ENCODE measurements at regions of chr3 and their contacts with region 1.

Region 1: DNA sequence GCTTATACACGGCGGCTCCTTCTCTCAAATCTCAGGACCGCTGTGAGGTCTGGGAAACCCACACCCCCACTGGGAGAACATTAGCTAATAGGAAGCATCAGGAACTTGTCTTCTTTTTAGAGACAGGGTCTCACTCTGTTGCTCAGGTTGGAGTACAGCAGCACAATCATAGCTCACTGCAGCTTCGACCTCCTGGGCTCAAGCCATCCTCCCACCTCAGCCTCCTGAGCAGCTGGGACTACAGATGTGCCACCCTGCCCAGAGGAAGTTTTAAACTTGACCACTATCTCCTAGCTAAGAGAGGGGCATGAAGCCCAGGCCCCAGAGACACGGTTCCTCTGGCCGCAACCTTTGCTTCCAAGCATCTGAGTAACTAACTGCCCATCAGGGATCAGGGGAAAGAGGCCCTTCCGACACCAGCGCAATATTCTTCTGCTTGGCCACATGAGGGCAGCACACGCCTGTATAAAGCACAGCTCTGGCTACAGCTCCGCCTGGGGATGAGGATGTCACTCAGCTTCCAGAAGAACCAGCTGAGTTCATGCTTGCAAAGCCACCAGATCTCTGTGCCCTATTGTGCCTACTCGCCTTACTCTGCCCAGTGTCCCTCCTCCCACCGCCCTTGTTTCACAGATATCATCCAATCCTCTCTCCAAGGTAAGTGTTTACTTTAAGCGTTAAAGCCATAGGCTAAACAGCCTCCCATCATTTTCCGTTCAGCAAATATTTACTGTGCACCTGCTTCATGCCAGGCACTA is 57.5 kb upstream of the SLC6A11 start:
- DNase-seq: peak; percentile 66 to 73
- H3K4me3 ChIP-seq: no peak overlapping the region
- H3K4me3 Mint-ChIP-seq: no peak overlapping the region
- H3K27ac Mint-ChIP-seq: no peak overlapping the region
- H3K4me1 ChIP-seq: no peaks in the 10 kb centered on the region
- H3K4me1 Mint-ChIP-seq: no peaks in the 10 kb centered on the region
- H3K27me3 ChIP-seq: no peaks in the 10 kb centered on the region; the same call in 1 of the 2 replicates
- H3K27me3 Mint-ChIP-seq: peaks cover 10% of the 10 kb centered on the region
- CTCF ChIP-seq: peak; percentile 74 to 82

Region 2: DNA sequence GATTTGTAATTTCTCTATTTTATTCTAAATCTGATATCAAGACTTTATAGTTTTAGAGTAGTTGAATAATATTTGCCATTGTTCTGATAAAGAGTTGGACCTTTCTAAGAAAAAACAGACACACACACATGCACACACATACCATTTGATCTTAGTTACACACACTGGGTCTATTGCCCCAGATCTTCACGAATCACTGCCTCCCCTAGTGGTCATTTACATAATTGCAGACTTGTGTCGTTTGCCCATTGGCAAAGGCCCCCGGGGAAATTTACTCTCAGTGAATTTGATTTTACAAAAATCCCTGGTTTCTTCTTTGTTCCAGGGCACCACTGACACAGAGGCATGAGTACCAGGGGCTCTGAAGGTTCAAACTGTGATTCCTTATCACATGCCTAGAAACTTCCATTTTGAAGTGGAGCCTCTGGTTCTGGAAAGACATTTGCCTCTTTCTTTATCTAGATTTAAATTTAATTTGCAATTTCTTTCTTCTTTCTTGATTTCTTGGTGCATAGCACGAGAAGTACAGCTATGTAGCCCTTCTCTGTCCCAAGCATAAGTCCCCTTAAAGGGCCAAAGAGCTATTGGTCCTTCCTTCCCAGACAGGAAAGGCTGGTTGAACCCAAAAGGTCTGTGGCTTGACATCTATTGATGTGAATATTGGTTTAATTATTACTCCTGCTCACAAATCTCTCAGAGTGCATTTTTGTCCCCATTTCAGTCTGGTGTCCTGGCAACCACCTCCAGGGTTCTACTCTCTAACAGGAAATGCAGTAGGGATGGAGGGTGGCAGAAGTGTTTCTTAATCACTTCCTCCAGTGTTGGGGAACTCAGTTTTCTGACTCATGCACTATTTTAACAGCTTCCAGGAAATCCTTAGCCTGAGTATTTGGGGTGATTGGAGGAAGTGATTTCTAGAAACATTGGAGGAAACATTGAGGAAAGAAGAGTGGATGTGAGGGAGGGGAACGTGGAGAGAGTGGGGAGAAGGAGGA is 25.2 kb after region 1 on chr3:
- CTCF ChIA-PET with region 1: no interaction called
- POLR2A ChIA-PET with region 1: no interaction called
- intact Hi-C with region 1: loop called (anchors 1 kb)
- DNase-seq: peak in 1 of 2 experiments; percentile 56
- H3K4me3 ChIP-seq: no peak overlapping the region
- H3K4me3 Mint-ChIP-seq: no peak overlapping the region
- H3K27ac Mint-ChIP-seq: no peak overlapping the region
- H3K4me1 ChIP-seq: no peaks in the 10 kb centered on the region
- H3K4me1 Mint-ChIP-seq: peaks cover 8% of the 10 kb centered on the region
- H3K27me3 ChIP-seq: no peaks in the 10 kb centered on the region
- H3K27me3 Mint-ChIP-seq: no peaks in the 10 kb centered on the region
- CTCF ChIP-seq: peak; percentile 66 to 82

Region 3: DNA sequence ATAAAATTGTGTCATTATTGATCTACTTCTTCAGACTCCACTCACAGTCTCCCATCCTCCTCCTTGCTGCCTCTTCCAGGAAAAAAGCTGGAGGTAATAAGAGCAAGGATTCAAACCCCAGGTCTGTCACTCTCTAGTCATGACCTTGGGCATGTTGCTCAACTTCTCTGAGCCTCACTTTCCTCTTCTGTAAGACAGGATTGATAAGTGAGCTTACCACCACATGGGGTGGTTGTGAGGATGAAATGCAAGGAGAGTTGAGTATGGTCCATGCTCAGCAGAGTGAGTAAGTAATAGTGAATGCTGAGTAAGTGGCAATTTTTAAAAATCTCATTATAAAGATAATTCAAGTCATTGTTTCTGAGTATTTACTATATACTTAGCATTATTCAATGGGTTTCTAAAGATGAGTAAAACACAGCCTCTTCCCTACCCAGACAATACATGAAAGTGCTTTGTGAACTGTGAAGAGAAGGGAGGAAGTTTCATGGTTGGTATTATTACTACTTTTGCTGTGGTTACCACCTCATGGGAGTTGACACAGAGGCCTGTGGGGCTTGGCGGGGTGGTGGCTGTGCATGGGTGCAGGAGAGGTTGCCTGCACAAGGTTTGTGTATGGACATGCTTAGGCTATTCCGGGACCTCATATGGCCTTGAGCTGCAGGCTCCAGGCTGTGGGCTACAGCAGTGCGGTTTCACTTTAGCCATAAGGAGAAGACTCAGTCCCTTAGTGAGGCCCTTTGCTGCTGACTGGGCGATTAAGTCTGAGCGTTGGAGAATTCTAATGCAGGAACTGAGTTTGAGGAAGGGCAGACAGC is 87.6 kb after region 1 on chr3:
- CTCF ChIA-PET with region 1: no interaction called
- POLR2A ChIA-PET with region 1: no interaction called
- intact Hi-C with region 1: no loop called
- DNase-seq: no peak
- H3K4me3 ChIP-seq: no peak overlapping the region
- H3K4me3 Mint-ChIP-seq: no peak overlapping the region
- H3K27ac Mint-ChIP-seq: no peak overlapping the region
- H3K4me1 ChIP-seq: no peaks in the 10 kb centered on the region
- H3K4me1 Mint-ChIP-seq: no peaks in the 10 kb centered on the region
- H3K27me3 ChIP-seq: no peaks in the 10 kb centered on the region
- H3K27me3 Mint-ChIP-seq: peaks cover 15% of the 10 kb centered on the region
- CTCF ChIP-seq: no peak

Region 4: DNA sequence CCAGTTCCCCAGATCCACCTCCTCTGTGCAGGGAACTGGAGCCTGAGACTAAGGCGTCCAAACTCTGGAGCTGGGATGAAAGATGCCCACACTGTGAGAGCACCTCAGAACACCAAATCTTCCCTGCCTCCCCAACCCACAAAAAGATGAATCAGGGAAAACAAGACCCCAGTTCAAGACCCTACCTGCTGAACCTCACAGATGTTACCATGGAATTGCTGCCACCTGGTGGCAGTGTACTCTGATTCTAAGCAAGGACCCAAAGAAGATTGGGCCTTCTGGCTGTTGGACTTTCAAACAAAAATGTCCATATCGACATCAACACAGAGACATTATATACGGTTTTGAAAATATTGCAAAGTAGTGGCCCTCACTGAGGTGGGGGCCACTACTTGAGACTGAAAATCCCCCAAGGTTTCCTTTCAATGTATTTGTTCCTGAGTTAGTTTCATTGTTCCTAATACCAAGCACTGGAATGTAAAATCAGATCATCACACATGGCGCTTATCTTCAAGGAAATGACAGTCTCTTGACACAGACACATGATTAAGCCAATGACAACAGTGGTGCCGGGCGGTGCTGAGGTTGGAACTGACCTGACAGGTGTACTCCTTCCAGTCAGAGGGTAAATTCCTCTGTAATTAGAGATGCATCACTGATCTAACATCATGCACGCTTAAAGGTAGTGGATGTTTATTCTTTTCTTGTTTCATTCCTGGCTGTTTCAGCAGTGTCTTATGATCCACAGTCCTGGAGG is 125.2 kb after region 1 on chr3:
- CTCF ChIA-PET with region 1: interaction called, 5 read pairs
- POLR2A ChIA-PET with region 1: no interaction called
- intact Hi-C with region 1: loop called (anchors 1 kb)
- DNase-seq: peak in 1 of 2 experiments; percentile 26
- H3K4me3 ChIP-seq: no peak overlapping the region
- H3K4me3 Mint-ChIP-seq: no peak overlapping the region
- H3K27ac Mint-ChIP-seq: no peak overlapping the region
- H3K4me1 ChIP-seq: no peaks in the 10 kb centered on the region
- H3K4me1 Mint-ChIP-seq: no peaks in the 10 kb centered on the region
- H3K27me3 ChIP-seq: no peaks in the 10 kb centered on the region; the same call in 1 of the 2 replicates
- H3K27me3 Mint-ChIP-seq: peaks cover 19% of the 10 kb centered on the region
- CTCF ChIP-seq: peak; percentile 36 to 61

Region 5: DNA sequence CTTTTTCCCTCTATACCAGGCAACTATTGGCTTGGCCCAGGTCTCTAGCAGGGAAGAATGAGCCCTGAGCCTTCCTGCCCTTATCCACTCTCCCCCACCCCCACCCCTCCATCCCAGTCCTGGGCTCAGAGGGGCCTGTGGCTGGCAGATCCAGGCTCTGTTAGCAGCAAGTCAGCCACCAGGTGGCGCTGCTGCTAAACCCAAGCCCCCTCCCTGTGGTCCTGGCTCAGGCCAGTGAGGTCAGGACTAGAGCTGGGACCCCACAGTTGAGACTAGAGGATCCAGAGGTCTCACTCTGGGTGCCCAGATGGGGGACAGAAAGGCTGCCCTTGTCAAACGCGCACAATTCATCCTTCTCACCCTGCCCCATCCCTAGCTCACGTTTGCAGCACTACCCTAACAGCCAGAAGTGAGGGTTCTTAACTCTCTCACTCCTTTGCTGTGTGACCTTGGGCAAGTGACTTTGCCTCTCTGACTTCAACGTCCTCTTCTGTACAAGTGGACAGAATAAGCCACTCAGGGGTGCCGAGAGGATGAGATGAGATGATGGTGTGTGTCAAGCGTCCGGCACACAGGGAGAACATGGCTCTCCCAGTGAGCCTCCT is 187.3 kb after region 1 on chr3:
- CTCF ChIA-PET with region 1: interaction called, 4 read pairs
- POLR2A ChIA-PET with region 1: no interaction called
- intact Hi-C with region 1: loop called (anchors 1 kb)
- DNase-seq: peak; percentile 57 to 66
- H3K4me3 ChIP-seq: no peak overlapping the region
- H3K4me3 Mint-ChIP-seq: no peak overlapping the region
- H3K27ac Mint-ChIP-seq: no peak overlapping the region
- H3K4me1 ChIP-seq: no peaks in the 10 kb centered on the region
- H3K4me1 Mint-ChIP-seq: no peaks in the 10 kb centered on the region
- H3K27me3 ChIP-seq: no peaks in the 10 kb centered on the region
- H3K27me3 Mint-ChIP-seq: peaks cover 14% of the 10 kb centered on the region
- CTCF ChIP-seq: peak; percentile 76 to 80

Region 6: DNA sequence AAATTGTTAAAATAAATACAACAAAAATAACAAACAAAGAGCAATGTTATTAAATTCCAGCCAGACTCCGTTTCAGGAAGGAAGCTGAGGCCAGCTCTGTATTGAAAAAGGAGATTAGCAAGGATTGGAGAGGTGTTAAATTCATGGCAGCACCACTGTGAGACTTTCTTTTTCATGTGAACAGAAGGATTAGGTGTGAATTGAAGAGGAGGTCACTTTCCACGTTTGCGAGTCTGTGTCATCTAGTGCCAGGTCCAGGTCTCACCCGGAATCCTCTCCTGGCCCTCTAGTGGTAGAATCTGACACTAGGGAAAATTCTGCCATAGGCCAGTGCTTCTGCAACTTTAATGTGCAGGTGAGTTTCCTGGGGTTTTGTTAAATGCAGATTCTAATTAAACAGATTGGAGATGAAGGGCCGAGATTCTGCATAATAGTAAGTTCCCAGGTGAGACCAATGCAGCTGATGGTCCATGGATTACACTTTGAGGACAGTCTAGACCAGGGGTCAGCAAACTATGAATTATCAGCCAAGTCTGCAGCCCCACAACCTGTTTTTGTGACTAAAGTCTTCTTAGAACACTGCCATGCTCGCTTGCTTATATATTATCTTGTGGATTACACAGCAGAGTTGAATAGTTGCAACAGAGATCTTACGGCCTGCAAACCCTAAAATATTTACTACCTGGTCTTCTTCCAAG is 224.9 kb after region 1 on chr3:
- CTCF ChIA-PET with region 1: no interaction called
- POLR2A ChIA-PET with region 1: no interaction called
- intact Hi-C with region 1: loop called (anchors 1 kb)
- DNase-seq: peak; percentile 49 to 63
- H3K4me3 ChIP-seq: no peak overlapping the region
- H3K4me3 Mint-ChIP-seq: no peak overlapping the region
- H3K27ac Mint-ChIP-seq: no peak overlapping the region
- H3K4me1 ChIP-seq: peaks cover 6% of the 10 kb centered on the region; the same call in 1 of the 2 replicates
- H3K4me1 Mint-ChIP-seq: no peaks in the 10 kb centered on the region
- H3K27me3 ChIP-seq: no peaks in the 10 kb centered on the region
- H3K27me3 Mint-ChIP-seq: peaks cover 8% of the 10 kb centered on the region
- CTCF ChIP-seq: peak; percentile 69 to 86

Region 7: DNA sequence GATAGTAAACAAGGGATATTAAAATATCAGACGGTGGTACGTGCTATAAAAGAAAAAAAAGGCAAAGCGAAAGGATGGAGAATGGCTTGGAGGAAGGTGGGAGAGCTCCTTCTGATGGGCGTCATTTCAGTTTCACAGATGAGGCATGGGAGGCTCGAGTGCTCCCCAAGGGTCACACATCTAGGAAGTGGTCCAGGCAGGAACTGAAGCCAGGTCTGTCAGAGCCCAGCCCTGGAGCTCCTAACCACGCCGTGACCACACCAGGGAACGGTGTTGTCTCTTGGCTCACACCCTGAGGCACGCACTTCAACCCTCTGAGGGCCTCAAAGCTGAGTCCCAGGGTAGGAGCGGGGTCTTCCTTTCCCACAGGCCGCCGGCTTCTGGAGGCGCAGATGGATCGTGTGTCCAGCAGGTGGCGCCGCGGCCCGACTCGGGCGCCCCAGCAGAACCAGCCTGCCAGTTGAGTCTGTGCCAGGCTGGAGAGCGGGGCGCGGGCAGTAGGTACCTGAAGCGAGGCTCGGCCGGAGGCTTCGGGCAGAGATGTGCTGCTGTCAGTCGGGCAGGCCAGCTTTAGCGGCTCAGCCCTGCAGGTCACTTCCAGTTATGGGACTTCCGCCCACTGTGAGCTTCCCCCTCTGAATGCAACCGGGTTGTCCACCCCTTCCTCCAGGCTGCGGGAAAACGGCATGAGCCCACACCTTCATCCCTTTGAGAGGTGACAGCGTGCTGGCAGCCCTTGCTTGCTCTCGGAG is 302.2 kb after region 1 on chr3:
- CTCF ChIA-PET with region 1: interaction called, 7 read pairs
- POLR2A ChIA-PET with region 1: no interaction called
- intact Hi-C with region 1: loop called (anchors 1 kb)
- DNase-seq: peak; percentile 41 to 52
- H3K4me3 ChIP-seq: no peak overlapping the region
- H3K4me3 Mint-ChIP-seq: no peak overlapping the region
- H3K27ac Mint-ChIP-seq: no peak overlapping the region
- H3K4me1 ChIP-seq: no peaks in the 10 kb centered on the region
- H3K4me1 Mint-ChIP-seq: no peaks in the 10 kb centered on the region
- H3K27me3 ChIP-seq: no peaks in the 10 kb centered on the region; the same call in 1 of the 2 replicates
- H3K27me3 Mint-ChIP-seq: peaks cover 15% of the 10 kb centered on the region
- CTCF ChIP-seq: peak; percentile 53 to 74

Measured in Caco-2 (cell line).